H1 (cell line): ENCODE measurements at regions of chr9 and their contacts with region 1.

Region 1: DNA sequence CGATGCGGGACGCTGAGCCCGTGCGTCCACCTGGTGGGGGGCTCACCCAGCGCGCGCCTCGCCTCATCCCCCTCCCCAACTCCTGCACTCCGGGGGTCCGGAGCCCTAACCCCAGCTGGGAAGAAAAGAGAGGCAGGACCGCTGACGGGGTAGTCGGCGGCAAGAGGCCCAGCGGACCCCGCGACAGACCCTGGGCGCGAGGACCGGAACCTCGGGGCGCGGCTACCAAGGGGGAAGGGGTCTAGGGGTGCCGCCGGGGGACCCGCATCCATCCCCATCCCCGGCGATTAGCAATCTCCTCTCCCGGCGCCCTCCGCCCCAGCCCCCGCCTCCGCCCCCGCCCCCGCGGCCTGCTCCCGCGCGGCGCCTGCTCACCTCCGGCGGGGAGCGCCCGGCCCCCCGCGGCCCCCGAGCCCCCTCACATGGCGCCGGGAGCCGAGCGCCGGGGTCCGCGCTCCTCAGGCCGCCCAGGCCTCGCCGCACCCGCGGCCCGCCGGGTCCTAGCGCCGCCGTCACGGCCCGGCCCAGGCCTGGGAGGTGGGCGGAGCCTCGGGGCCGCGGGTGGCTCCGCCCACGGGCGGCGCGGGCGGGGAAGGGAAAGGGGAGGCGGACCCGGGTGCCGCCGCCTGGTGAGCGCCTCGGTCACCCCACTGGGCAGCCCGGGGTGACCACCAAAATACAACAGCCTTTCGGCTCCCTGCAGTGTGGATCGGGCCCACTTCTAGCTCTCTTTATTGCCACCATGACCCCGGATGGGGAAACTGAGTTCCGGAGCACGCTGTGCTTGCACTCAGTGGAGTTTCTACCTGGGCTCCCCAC is at the start of gene ST6GALNAC6:
- DNase-seq: peak in 1 of 2 experiments; percentile 82
- H3K4me3 ChIP-seq: peak within 1 kb of the TSS; percentile 78 to 99 (median 88)
- H3K27ac ChIP-seq: no peak within 1 kb of the TSS
- H3K4me1 ChIP-seq: peaks cover 3 to 40% (median 25%) of the 10 kb centered on the region in 4 experiments
- H3K27me3 ChIP-seq: no peaks in the 10 kb centered on the region
- CTCF ChIP-seq: no peak
- EP300 ChIP-seq: no peak
- POLR2A ChIP-seq: peak in 1 of 2 experiments; percentile 44; a peak in 1 of 3 replicates
- RAD21 ChIP-seq: no peak
- total RNA-seq, gene ST6GALNAC6: 37.7 and 43.7 TPM in 2 replicates

Region 2: DNA sequence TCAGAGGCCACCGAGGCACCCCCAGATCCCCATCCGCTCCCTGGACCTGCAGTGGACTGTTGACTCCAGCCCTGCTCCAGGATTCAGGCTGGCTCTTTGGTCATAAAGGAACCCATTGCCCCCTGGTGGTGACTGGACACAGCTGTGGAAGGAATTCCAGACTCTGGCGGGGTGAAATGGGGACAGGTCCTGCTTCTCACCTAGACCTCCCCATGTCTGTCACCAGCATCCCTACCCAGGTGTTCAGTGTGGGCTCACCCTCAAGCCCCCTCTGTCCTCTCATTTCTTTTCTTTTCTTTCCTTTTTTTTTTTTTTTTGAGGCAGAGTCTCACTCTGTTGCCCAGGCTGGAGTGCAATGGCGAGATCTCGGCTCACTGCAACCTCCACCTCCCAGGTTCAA is 312.8 kb before region 1 on chr9:
- CTCF ChIA-PET with region 1: no interaction called
- POLR2A ChIA-PET with region 1: no interaction called
- DNase-seq: peak in 1 of 2 experiments; percentile 75
- H3K4me3 ChIP-seq: no peak overlapping the region
- H3K27ac ChIP-seq: no peak overlapping the region
- H3K4me1 ChIP-seq: peaks cover 0 to 3% (median 0%) of the 10 kb centered on the region in 4 experiments; a peak in 2 of 7 replicates
- H3K27me3 ChIP-seq: no peaks in the 10 kb centered on the region
- CTCF ChIP-seq: peak; percentile 88 to 95 (median 94)
- EP300 ChIP-seq: no peak
- POLR2A ChIP-seq: no peak
- RAD21 ChIP-seq: peak; percentile 89 to 92

Region 3: GRCh38 chr9:127884427-127884911 is 14.9 kb before region 1 on chr9:
- CTCF ChIA-PET with region 1: interaction called, 5 read pairs
- POLR2A ChIA-PET with region 1: interaction called, 91 read pairs
- DNase-seq: no peak
- H3K4me3 ChIP-seq: no peak overlapping the region
- H3K27ac ChIP-seq: no peak overlapping the region
- H3K4me1 ChIP-seq: no peaks in the 10 kb centered on the region; a peak in 3 of 7 replicates
- H3K27me3 ChIP-seq: no peaks in the 10 kb centered on the region
- CTCF ChIP-seq: no peak
- EP300 ChIP-seq: no peak
- POLR2A ChIP-seq: no peak
- RAD21 ChIP-seq: no peak